Gastrocnemius medialis (tissue), 4 donors: ENCODE measurements at regions of chr2 and their contacts with region 1.

Region 1: DNA sequence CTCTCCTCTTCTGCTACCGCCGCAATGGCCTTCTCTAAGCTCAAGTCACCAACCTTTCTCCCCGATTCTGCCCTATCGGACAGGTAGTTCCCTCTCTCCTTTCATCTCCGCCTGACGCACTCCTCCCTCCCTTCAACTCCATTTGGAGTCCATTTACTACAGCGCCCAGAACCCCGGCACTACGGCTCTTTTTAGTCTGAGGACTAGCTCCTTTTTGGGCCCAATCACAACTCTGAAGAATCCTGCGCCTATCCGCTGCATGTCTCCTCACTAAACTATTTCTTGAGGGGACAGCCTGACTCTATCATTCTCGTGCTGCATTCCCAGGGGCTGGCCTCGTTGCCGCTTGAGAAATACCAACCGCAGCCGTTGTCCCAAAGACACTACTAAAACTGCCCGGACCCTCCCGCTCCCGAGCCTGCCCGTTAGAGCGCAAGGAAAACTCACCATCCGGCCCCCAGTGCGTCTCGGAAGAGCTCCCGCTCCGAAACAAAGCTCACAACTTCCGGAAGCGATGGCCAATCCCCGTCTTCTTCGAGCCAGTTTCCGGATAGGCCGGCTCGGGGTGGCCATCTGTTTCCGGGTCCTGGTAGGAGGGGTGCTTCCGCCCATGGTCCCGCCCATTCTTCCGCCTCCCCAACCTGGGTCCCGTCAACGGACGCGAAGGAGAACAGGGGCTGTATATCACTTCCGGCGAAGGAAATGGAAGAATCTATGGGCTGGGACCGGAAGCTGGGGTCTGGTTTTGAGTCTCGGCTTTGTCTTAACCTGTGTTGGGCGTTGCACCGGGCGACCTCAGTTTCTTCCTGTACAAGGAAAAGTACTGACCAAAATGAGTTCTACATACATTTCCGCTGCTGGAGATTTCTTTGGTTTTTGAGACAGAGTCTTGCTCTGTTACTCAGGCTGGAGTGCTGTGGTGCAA is at the start of gene TPRKB:
- DNase-seq: peak; percentile 96 to 97
- ATAC-seq: peak; percentile 99
- H3K4me3 ChIP-seq: peak within 1 kb of the TSS; percentile 74 to 89 (median 82)
- H3K27ac ChIP-seq: peak within 1 kb of the TSS; percentile 69 to 86 (median 78)
- H3K4me1 ChIP-seq: peaks cover 19 to 20% of the 10 kb centered on the region in 2 donors
- H3K27me3 ChIP-seq: no peaks in the 10 kb centered on the region
- CTCF ChIP-seq: no peak
- POLR2A ChIP-seq: peak; percentile 58 to 65
- total RNA-seq, gene TPRKB: 49.4 to 90.1 (median 55.9) TPM

Region 2: DNA sequence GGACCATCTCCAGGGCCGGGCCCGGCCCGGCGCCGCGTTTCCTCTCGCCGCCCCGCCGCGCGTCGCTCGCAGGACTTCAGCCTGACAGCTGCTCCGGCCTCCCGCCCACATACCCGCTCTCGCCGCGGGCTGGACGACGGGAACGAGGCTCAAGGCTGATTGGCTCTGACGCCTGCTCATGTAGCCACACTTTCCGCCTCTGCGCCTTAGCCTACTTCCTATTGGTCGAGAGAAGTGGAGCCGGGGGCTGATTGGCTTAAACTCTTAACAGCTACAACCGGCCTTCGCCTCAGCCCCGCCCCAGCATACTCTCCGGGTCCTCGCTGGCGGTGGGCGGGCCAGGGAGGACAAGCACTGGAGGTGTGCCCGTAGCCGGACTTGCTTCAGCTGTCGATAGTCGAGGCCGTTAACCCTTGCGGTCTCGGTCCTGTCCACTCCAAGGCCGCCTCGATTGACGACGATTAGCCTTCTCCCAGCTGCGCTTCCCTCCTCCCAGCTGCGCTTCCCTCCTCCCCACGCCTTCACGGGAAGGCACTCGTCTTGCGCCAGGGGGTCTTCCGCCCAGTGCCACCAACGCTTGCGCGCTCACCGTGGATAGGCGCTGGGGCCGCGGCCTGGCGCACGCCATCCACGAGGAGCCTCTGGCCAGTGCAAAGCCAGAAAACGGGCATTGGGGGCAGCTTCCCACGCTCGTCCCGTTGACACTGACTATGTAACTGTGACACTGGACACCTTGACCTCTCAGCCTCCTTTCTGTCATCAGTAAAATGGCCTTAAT is 503.8 kb before region 1 on chr2 and contains the start of gene PRADC1:
- in situ Hi-C with region 1: loop called in 3 of 4 experiments (anchors 25 kb)
- intact Hi-C with region 1: loop called (anchors 1 kb)
- DNase-seq: peak; percentile 100
- ATAC-seq: peak; percentile 90 to 93
- H3K4me3 ChIP-seq: peak within 1 kb of the TSS; percentile 67 to 100 (median 95)
- H3K27ac ChIP-seq: peak within 1 kb of the TSS; percentile 90 to 100 (median 95)
- H3K4me1 ChIP-seq: peaks cover 17 to 35% of the 10 kb centered on the region in 2 donors
- H3K27me3 ChIP-seq: no peaks in the 10 kb centered on the region
- CTCF ChIP-seq: no peak
- POLR2A ChIP-seq: peak; percentile 85 to 87
- total RNA-seq, gene PRADC1: 69.4 to 132 (median 104) TPM

Region 3: GRCh38 chr2:73779467-73780236 is 42.5 kb after region 1 on chr2 and contains the start of gene DUSP11:
- in situ Hi-C with region 1: no loop called
- intact Hi-C with region 1: loop called (anchors 10 kb)
- DNase-seq: peak; percentile 87 to 95
- ATAC-seq: peak; percentile 99
- H3K4me3 ChIP-seq: peak within 1 kb of the TSS; percentile 83 to 99 (median 98)
- H3K27ac ChIP-seq: peak within 1 kb of the TSS; percentile 90 to 98 (median 96)
- H3K4me1 ChIP-seq: peaks cover 13 to 15% of the 10 kb centered on the region in 2 donors
- H3K27me3 ChIP-seq: no peaks in the 10 kb centered on the region
- CTCF ChIP-seq: peak; percentile 86 to 93 (median 89)
- POLR2A ChIP-seq: peak; percentile 78 to 80
- total RNA-seq, gene DUSP11: 13.6 to 15.8 (median 14.7) TPM

Region 4: DNA sequence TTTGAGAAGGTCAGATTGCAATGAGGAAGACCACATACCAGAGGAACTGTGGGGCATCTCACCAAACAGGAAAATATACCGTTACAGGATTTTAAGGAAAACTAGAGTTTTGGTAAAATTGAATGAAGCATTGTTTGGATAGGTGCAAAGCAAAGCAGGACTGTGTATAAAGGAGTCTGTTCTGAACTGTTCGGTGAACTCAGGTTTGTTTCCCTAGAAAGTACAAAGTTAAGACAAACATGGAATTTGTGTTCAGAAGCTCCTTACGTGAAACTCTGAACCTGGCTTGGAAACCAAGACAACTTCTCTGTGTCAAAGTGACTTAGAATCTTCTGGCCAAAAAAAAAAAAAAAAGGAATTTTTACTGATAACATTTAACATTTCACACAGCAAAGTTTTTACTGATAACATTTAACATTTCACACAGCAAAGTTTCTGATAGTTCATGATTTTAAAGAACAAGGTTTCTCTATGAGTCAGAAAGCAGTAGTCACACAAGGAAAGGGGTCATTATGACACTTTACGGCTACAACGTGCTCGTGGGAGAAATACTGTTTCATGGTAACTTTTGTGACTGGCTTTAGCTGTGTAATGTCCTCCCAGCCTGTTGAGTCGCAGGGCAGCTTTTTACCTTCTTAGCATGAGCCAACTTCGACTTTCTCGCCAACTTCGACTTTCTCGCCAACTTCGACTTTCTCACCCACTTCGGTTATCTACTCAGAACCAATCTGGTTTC is 226.4 kb after region 1 on chr2:
- in situ Hi-C with region 1: no loop called
- intact Hi-C with region 1: no loop called
- DNase-seq: no peak
- ATAC-seq: no peak
- H3K4me3 ChIP-seq: no peak overlapping the region
- H3K27ac ChIP-seq: no peak overlapping the region
- H3K4me1 ChIP-seq: no peaks in the 10 kb centered on the region
- H3K27me3 ChIP-seq: no peaks in the 10 kb centered on the region
- CTCF ChIP-seq: no peak
- POLR2A ChIP-seq: no peak

Region 5: GRCh38 chr2:74379851-74380789 is 643.0 kb after region 1 on chr2 and contains the start of gene DCTN1:
- in situ Hi-C with region 1: no loop called
- intact Hi-C with region 1: loop called (anchors 10 kb)
- DNase-seq: peak in 1 of 2 donors; percentile 23
- ATAC-seq: peak; percentile 68 to 70
- H3K4me3 ChIP-seq: peak within 1 kb of the TSS; percentile 41 to 53 (median 50)
- H3K27ac ChIP-seq: peak within 1 kb of the TSS in 3 of 4 donors; percentile 22 to 40 (median 29)
- H3K4me1 ChIP-seq: peaks cover 47 to 49% of the 10 kb centered on the region in 2 donors
- H3K27me3 ChIP-seq: no peaks in the 10 kb centered on the region
- CTCF ChIP-seq: no peak
- POLR2A ChIP-seq: no peak
- total RNA-seq, gene DCTN1: 89.8 to 127 (median 103) TPM

Region 6: GRCh38 chr2:74529357-74530238 is 792.5 kb after region 1 on chr2 and contains the starts of genes AUP1 and HTRA2:
- in situ Hi-C with region 1: no loop called
- intact Hi-C with region 1: loop called (anchors 1 kb)
- DNase-seq: peak; percentile 98
- ATAC-seq: peak; percentile 91 to 94
- H3K4me3 ChIP-seq: peak within 1 kb of the TSS; percentile 80 to 100 (median 93)
- H3K27ac ChIP-seq: peak within 1 kb of the TSS; percentile 84 to 94 (median 89)
- H3K4me1 ChIP-seq: peaks cover 19 to 28% of the 10 kb centered on the region in 2 donors
- H3K27me3 ChIP-seq: no peaks in the 10 kb centered on the region
- CTCF ChIP-seq: no peak
- POLR2A ChIP-seq: peak; percentile 70 to 89
- total RNA-seq, gene AUP1: 112 to 148 (median 115) TPM
- total RNA-seq, gene HTRA2: 24.2 to 38.5 (median 29.4) TPM